Naive thymus-derived CD4-positive, alpha-beta T cell (primary cell): ENCODE measurements at regions of chr12 and their contacts with region 1.

Region 1: DNA sequence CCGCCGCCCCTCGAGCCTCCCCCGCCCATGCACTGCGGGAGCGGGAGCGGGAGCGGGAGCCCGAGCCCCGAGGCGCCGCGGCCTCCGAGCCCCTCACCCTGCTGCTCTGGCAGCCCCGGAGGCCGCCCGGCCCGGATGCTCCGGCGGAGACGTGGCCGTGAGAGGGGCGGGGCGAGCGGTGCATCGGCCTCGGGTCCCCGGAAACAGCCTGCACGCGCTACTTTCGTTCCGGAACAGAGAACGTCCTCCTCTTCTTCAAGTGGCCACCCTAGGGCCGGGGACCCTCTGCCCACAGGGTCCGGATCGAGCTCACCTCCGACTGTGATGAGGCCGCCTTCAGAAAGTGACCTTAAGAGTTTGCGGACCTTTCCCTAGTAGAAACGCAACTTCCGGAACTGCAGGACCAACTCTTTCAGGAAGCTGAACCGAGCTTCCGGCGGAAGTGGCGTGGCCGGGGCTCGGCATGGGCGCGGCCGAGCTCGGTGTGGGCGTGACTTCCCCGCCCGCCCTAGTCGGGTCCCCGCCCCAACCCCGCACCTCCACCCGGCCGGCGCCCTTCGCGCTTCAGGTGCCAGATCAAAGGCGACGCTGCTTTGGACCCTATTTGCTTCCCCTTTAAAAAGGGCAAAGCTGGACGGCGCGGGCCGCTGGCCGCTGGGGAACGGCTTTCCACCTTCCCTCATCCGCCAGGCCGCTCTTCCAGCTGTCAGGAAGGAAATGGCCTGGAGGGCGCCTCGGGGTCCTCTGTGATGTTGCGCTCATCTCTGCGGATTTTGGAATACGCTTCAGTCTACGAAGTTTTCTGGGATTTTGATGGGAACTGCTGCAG is at the start of gene GOLGA3:
- DNase-seq: peak; percentile 92 to 98 (median 95)
- ATAC-seq: peak; percentile 96
- H3K4me3 ChIP-seq: peak within 1 kb of the TSS; percentile 95
- H3K4me3 Mint-ChIP-seq: peak within 1 kb of the TSS; percentile 92 to 98 (median 96)
- H3K27ac ChIP-seq: peak within 1 kb of the TSS; percentile 99
- H3K27ac Mint-ChIP-seq: peak within 1 kb of the TSS; percentile 98 to 100 (median 100)
- H3K4me1 ChIP-seq: peaks cover 8 to 25% of the 10 kb centered on the region in 2 donors
- H3K4me1 Mint-ChIP-seq: peaks cover 28 to 69% (median 58%) of the 10 kb centered on the region in 7 donors
- H3K27me3 ChIP-seq: no peaks in the 10 kb centered on the region
- H3K27me3 Mint-ChIP-seq: peaks cover 0 to 3% (median 0%) of the 10 kb centered on the region in 5 donors
- total RNA-seq, gene GOLGA3: 46.3 to 65.7 (median 63.6) TPM

Region 2: DNA sequence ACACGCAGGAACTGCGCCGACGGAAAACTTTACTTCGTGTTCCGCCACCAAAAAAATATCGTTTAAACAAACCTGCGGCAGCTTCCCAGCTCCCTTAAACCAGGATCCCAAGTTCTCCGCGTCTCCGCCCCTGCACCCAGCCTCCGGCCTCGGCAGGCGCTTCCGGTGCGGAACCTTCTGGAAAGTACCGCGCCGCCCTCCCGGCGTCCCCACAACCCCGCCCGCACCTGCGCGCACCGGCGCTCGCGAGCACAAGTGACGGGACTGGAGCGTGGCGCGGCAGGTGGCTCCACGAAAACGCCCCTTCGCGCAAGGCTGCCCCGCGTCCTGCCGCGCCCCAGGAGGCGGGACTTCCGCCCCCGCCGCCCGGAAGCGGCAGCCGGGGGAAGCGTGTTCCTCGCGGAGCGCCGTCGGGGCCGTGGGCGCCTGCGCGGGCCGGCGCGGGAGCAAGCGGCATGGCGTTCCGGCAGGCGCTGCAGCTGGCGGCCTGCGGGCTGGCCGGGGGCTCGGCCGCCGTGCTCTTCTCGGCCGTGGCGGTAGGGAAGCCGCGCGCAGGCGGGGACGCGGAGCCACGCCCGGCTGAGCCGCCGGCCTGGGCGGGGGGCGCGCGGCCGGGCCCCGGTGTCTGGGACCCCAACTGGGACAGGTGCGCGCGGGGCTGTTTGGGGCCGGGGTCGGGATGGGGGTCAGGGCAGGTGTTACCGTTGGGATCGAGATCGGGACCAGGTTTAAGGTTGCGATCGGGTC is 118.3 kb before region 1 on chr12 and contains the start of gene PGAM5:
- CTCF ChIA-PET with region 1: no interaction called
- POLR2A ChIA-PET with region 1: interaction called, 3 read pairs
- intact Hi-C with region 1: loop called (anchors 1 to 2 kb)
- DNase-seq: peak; percentile 91 to 97 (median 95)
- ATAC-seq: peak; percentile 98
- H3K4me3 ChIP-seq: peak within 1 kb of the TSS; percentile 62
- H3K4me3 Mint-ChIP-seq: peak within 1 kb of the TSS; percentile 84 to 98 (median 88)
- H3K27ac ChIP-seq: peak within 1 kb of the TSS; percentile 92
- H3K27ac Mint-ChIP-seq: peak within 1 kb of the TSS; percentile 87 to 96 (median 92)
- H3K4me1 ChIP-seq: peaks cover 6 to 11% of the 10 kb centered on the region in 2 donors
- H3K4me1 Mint-ChIP-seq: peaks cover 0 to 36% (median 22%) of the 10 kb centered on the region in 7 donors
- H3K27me3 ChIP-seq: no peaks in the 10 kb centered on the region
- H3K27me3 Mint-ChIP-seq: no peaks in the 10 kb centered on the region
- total RNA-seq, gene PGAM5: 19.3 to 51.7 (median 21.4) TPM

Region 3: DNA sequence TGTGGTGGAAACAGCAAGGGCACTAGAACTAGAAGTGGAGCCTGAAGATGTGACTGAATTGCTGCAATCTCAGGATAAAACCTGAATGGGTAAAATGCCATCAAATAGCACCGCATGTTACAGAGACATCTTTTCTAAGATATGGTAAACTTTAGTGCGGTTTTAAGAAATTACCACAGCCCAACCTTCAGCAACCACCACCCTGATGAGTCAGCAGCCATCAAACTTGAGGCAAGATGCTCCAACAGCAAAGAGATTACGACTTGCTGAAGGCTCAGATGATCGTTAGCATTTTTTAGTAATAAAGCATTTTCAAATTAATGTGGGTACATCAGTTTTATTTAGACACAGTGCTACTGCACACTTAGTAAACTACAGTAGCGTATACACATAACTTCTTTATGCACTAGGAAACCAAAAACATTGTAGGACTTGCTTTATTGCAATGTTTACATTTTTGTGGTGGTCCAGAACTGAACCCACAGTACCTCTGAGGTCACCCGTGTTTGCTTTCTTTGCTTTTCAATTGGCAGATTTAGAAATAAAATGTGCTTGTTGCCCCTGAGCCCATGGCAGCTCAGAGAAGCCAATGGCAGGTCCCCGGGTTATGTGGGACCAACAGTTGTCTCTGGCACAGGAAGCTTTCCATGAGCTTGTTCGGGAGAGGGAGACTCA is 16.2 kb before region 1 on chr12:
- CTCF ChIA-PET with region 1: no interaction called
- POLR2A ChIA-PET with region 1: interaction called, 3 read pairs
- intact Hi-C with region 1: loop called in 1 of 2 experiments (anchors 2 kb)
- DNase-seq: no peak
- ATAC-seq: no peak
- H3K4me3 ChIP-seq: no peak overlapping the region
- H3K4me3 Mint-ChIP-seq: no peak overlapping the region
- H3K27ac ChIP-seq: no peak overlapping the region
- H3K27ac Mint-ChIP-seq: no peak overlapping the region
- H3K4me1 ChIP-seq: peaks cover 0 to 5% of the 10 kb centered on the region in 2 donors
- H3K4me1 Mint-ChIP-seq: peaks cover 2 to 18% (median 5%) of the 10 kb centered on the region in 7 donors
- H3K27me3 ChIP-seq: no peaks in the 10 kb centered on the region
- H3K27me3 Mint-ChIP-seq: no peaks in the 10 kb centered on the region

Region 4: GRCh38 chr12:132956011-132956788 is 127.3 kb after region 1 on chr12 and contains the start of gene ZNF605:
- CTCF ChIA-PET with region 1: no interaction called
- POLR2A ChIA-PET with region 1: no interaction called
- intact Hi-C with region 1: loop called in 1 of 2 experiments (anchors 1 kb)
- DNase-seq: peak; percentile 72 to 89 (median 80)
- ATAC-seq: peak; percentile 96
- H3K4me3 ChIP-seq: peak within 1 kb of the TSS; percentile 100
- H3K4me3 Mint-ChIP-seq: peak within 1 kb of the TSS; percentile 90 to 97 (median 95)
- H3K27ac ChIP-seq: peak within 1 kb of the TSS; percentile 85
- H3K27ac Mint-ChIP-seq: peak within 1 kb of the TSS; percentile 83 to 96 (median 91)
- H3K4me1 ChIP-seq: peaks cover 6 to 7% of the 10 kb centered on the region in 2 donors
- H3K4me1 Mint-ChIP-seq: peaks cover 19 to 53% (median 37%) of the 10 kb centered on the region in 7 donors
- H3K27me3 ChIP-seq: no peaks in the 10 kb centered on the region
- H3K27me3 Mint-ChIP-seq: no peaks in the 10 kb centered on the region
- total RNA-seq, gene ZNF605: 5.4 to 17.8 (median 11.8) TPM

Region 5: GRCh38 chr12:133037207-133038005 is 208.5 kb after region 1 on chr12 and contains the start of gene ZNF84:
- CTCF ChIA-PET with region 1: no interaction called
- POLR2A ChIA-PET with region 1: no interaction called
- intact Hi-C with region 1: loop called in 1 of 2 experiments (anchors 5 kb)
- DNase-seq: peak; percentile 93 to 99 (median 97)
- ATAC-seq: peak; percentile 96
- H3K4me3 ChIP-seq: peak within 1 kb of the TSS; percentile 65
- H3K4me3 Mint-ChIP-seq: peak within 1 kb of the TSS; percentile 78 to 96 (median 94)
- H3K27ac ChIP-seq: peak within 1 kb of the TSS; percentile 94
- H3K27ac Mint-ChIP-seq: peak within 1 kb of the TSS; percentile 87 to 99 (median 94)
- H3K4me1 ChIP-seq: peaks cover 0 to 4% of the 10 kb centered on the region in 2 donors
- H3K4me1 Mint-ChIP-seq: peaks cover 0 to 37% (median 13%) of the 10 kb centered on the region in 7 donors
- H3K27me3 ChIP-seq: no peaks in the 10 kb centered on the region
- H3K27me3 Mint-ChIP-seq: peaks cover 0 to 9% (median 3%) of the 10 kb centered on the region in 5 donors
- total RNA-seq, gene ZNF84: 27.4 to 52.7 (median 31.6) TPM

Region 6: GRCh38 chr12:133130038-133130807 is 301.3 kb after region 1 on chr12 and contains the starts of genes ZNF10 and ZNF891:
- CTCF ChIA-PET with region 1: no interaction called
- POLR2A ChIA-PET with region 1: no interaction called
- intact Hi-C with region 1: loop called in 1 of 2 experiments (anchors 1 kb)
- DNase-seq: peak; percentile 96 to 99 (median 98)
- ATAC-seq: peak; percentile 93
- H3K4me3 ChIP-seq: peak within 1 kb of the TSS; percentile 62
- H3K4me3 Mint-ChIP-seq: peak within 1 kb of the TSS; percentile 90 to 99 (median 94)
- H3K27ac ChIP-seq: peak within 1 kb of the TSS; percentile 98
- H3K27ac Mint-ChIP-seq: peak within 1 kb of the TSS; percentile 97 to 100 (median 99)
- H3K4me1 ChIP-seq: peaks cover 0 to 7% of the 10 kb centered on the region in 2 donors
- H3K4me1 Mint-ChIP-seq: peaks cover 15 to 51% (median 27%) of the 10 kb centered on the region in 7 donors
- H3K27me3 ChIP-seq: no peaks in the 10 kb centered on the region
- H3K27me3 Mint-ChIP-seq: no peaks in the 10 kb centered on the region
- total RNA-seq, gene ZNF10: 5.2 to 35.0 (median 29.2) TPM
- total RNA-seq, gene ZNF891: 2.4 to 7.9 (median 6.6) TPM

Region 7: GRCh38 chr12:133181238-133181959 is 352.5 kb after region 1 on chr12 and contains the start of gene ZNF268:
- CTCF ChIA-PET with region 1: no interaction called
- POLR2A ChIA-PET with region 1: no interaction called
- intact Hi-C with region 1: loop called in 1 of 2 experiments (anchors 1 kb)
- DNase-seq: peak; percentile 75 to 90 (median 86)
- ATAC-seq: peak; percentile 99
- H3K4me3 ChIP-seq: peak within 1 kb of the TSS; percentile 100
- H3K4me3 Mint-ChIP-seq: peak within 1 kb of the TSS; percentile 90 to 99 (median 95)
- H3K27ac ChIP-seq: peak within 1 kb of the TSS; percentile 84
- H3K27ac Mint-ChIP-seq: peak within 1 kb of the TSS; percentile 85 to 97 (median 92)
- H3K4me1 ChIP-seq: peaks cover 7 to 9% of the 10 kb centered on the region in 2 donors
- H3K4me1 Mint-ChIP-seq: peaks cover 16 to 34% (median 31%) of the 10 kb centered on the region in 7 donors
- H3K27me3 ChIP-seq: no peaks in the 10 kb centered on the region
- H3K27me3 Mint-ChIP-seq: no peaks in the 10 kb centered on the region
- total RNA-seq, gene ZNF268: 13.6 to 38.6 (median 18.6) TPM